ENCODE measurements at regions of chr16 and their contacts with region 1.

Region 1: GRCh38 chr16:17467923-17468540 is 2.7 kb downstream of the XYLT1 start:
- DNase-seq: peak; percentile 58
- ATAC-seq: peak; percentile 28
- H3K4me3 ChIP-seq: peak overlapping the region in 1 of 5 experiments; percentile 17
- H3K4me3 Mint-ChIP-seq: peak overlapping the region; percentile 93
- H3K27ac ChIP-seq: no peak overlapping the region
- H3K27ac Mint-ChIP-seq: no peak overlapping the region
- H3K4me1 ChIP-seq: peaks cover 42 to 46% of the 10 kb centered on the region in 2 donors
- H3K4me1 Mint-ChIP-seq: peaks cover 56% of the 10 kb centered on the region
- H3K27me3 ChIP-seq: no peaks in the 10 kb centered on the region
- H3K27me3 Mint-ChIP-seq: no peaks in the 10 kb centered on the region
- CTCF ChIP-seq: peak; percentile 12

Region 2: DNA sequence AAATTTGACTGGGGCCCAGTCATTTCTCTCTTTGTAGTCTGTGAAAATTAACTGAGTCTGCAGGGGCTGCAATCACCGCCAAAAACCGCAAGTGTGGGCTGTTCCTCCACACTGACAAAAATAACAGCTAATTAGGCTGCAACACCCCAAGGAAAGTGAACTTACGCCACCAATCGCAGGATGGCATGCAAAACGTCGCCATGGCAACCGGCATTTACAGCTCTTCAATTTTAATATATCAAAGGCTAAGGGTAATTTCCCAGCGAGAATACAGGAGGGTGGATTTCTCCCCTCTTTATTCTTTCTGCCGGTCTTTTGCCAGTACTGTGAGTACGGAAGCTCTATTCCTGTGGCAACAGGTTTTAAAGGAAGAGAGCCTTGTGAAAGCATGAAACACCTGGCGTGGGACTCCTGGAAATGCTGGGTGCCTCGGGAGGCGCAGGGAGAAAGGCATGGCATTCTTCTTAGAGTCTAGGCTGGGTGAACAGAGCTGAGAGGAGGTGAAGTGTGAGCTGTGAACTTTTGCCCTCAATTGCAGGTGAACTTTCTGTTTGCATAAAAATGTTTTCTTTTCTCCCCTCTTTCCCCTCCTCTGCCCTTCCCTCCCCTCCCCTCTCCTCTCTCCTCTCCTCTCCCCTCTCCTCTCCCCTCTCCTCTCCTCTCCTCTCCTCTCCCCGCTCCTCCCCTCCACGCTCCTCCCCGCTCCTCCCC is 397.0 kb before region 1 on chr16:
- CTCF ChIA-PET with region 1: no interaction called
- POLR2A ChIA-PET with region 1: no interaction called
- intact Hi-C with region 1: loop called (anchors 5 kb)
- DNase-seq: peak; percentile 92
- ATAC-seq: peak; percentile 81
- H3K4me3 ChIP-seq: peak overlapping the region in 4 of 5 experiments; percentile 42 to 57 (median 56)
- H3K4me3 Mint-ChIP-seq: peak overlapping the region; percentile 95
- H3K27ac ChIP-seq: peak overlapping the region; percentile 89 to 91
- H3K27ac Mint-ChIP-seq: peak overlapping the region; percentile 97
- H3K4me1 ChIP-seq: peaks cover 37 to 40% of the 10 kb centered on the region in 2 donors
- H3K4me1 Mint-ChIP-seq: peaks cover 52% of the 10 kb centered on the region
- H3K27me3 ChIP-seq: no peaks in the 10 kb centered on the region
- H3K27me3 Mint-ChIP-seq: no peaks in the 10 kb centered on the region
- CTCF ChIP-seq: no peak

Region 3: DNA sequence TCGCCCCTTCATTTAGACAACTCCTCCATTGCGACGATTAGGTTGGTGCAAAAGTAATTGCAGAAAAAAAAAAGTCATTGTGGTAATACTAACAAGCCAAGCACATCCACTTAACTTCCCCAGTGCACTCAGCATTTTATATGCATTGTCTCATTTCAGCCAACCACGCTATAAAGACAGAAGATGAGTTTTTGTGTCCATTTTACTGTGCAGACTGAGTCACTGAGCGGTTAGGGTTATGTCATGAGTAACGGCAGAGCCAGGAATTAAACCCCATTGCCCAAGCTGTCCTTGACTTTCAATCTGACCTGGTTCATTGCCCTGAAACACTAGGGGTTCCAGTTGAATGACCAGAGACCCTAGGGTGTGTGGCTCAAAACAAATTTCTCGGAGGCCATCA is 216.0 kb before region 1 on chr16:
- CTCF ChIA-PET with region 1: no interaction called
- POLR2A ChIA-PET with region 1: no interaction called
- intact Hi-C with region 1: no loop called
- DNase-seq: no peak
- ATAC-seq: no peak
- H3K4me3 ChIP-seq: no peak overlapping the region
- H3K4me3 Mint-ChIP-seq: no peak overlapping the region
- H3K27ac ChIP-seq: no peak overlapping the region
- H3K27ac Mint-ChIP-seq: no peak overlapping the region
- H3K4me1 ChIP-seq: peaks cover 16 to 17% of the 10 kb centered on the region in 2 donors
- H3K4me1 Mint-ChIP-seq: peaks cover 31% of the 10 kb centered on the region
- H3K27me3 ChIP-seq: no peaks in the 10 kb centered on the region
- H3K27me3 Mint-ChIP-seq: no peaks in the 10 kb centered on the region
- CTCF ChIP-seq: no peak

Region 4: GRCh38 chr16:17277977-17278381 is 190.1 kb before region 1 on chr16:
- CTCF ChIA-PET with region 1: interaction called, 38 read pairs
- POLR2A ChIA-PET with region 1: no interaction called
- intact Hi-C with region 1: loop called (anchors 1 kb)
- DNase-seq: peak; percentile 69
- ATAC-seq: peak; percentile 60
- H3K4me3 ChIP-seq: peak overlapping the region in 1 of 5 experiments; percentile 20
- H3K4me3 Mint-ChIP-seq: peak overlapping the region; percentile 35
- H3K27ac ChIP-seq: no peak overlapping the region
- H3K27ac Mint-ChIP-seq: no peak overlapping the region
- H3K4me1 ChIP-seq: peaks cover 59 to 60% of the 10 kb centered on the region in 2 donors
- H3K4me1 Mint-ChIP-seq: peaks cover 77% of the 10 kb centered on the region
- H3K27me3 ChIP-seq: no peaks in the 10 kb centered on the region
- H3K27me3 Mint-ChIP-seq: no peaks in the 10 kb centered on the region
- CTCF ChIP-seq: peak; percentile 53

Region 5: GRCh38 chr16:17369421-17370222 is 98.4 kb before region 1 on chr16:
- CTCF ChIA-PET with region 1: interaction called, 4 read pairs
- POLR2A ChIA-PET with region 1: interaction called, 8 read pairs
- intact Hi-C with region 1: loop called (anchors 5 kb)
- DNase-seq: peak; percentile 88
- ATAC-seq: peak; percentile 87
- H3K4me3 ChIP-seq: peak overlapping the region; percentile 22 to 56 (median 33)
- H3K4me3 Mint-ChIP-seq: peak overlapping the region; percentile 88
- H3K27ac ChIP-seq: peak overlapping the region; percentile 91 to 93
- H3K27ac Mint-ChIP-seq: peak overlapping the region; percentile 96
- H3K4me1 ChIP-seq: peaks cover 82 to 86% of the 10 kb centered on the region in 2 donors
- H3K4me1 Mint-ChIP-seq: peaks cover 87% of the 10 kb centered on the region
- H3K27me3 ChIP-seq: no peaks in the 10 kb centered on the region
- H3K27me3 Mint-ChIP-seq: no peaks in the 10 kb centered on the region
- CTCF ChIP-seq: no peak

Region 6: GRCh38 chr16:17602678-17603077 is 134.6 kb after region 1 on chr16:
- CTCF ChIA-PET with region 1: no interaction called
- POLR2A ChIA-PET with region 1: no interaction called
- intact Hi-C with region 1: no loop called
- DNase-seq: no peak
- ATAC-seq: no peak
- H3K4me3 ChIP-seq: no peak overlapping the region
- H3K4me3 Mint-ChIP-seq: no peak overlapping the region
- H3K27ac ChIP-seq: no peak overlapping the region
- H3K27ac Mint-ChIP-seq: no peak overlapping the region
- H3K4me1 ChIP-seq: no peaks in the 10 kb centered on the region
- H3K4me1 Mint-ChIP-seq: no peaks in the 10 kb centered on the region
- H3K27me3 ChIP-seq: peaks cover 0 to 3% (median 0%) of the 10 kb centered on the region in 4 experiments
- H3K27me3 Mint-ChIP-seq: peaks cover 51% of the 10 kb centered on the region
- CTCF ChIP-seq: no peak